ENCODE measurements at regions of chr10 and their contacts with region 1.

Region 1: DNA sequence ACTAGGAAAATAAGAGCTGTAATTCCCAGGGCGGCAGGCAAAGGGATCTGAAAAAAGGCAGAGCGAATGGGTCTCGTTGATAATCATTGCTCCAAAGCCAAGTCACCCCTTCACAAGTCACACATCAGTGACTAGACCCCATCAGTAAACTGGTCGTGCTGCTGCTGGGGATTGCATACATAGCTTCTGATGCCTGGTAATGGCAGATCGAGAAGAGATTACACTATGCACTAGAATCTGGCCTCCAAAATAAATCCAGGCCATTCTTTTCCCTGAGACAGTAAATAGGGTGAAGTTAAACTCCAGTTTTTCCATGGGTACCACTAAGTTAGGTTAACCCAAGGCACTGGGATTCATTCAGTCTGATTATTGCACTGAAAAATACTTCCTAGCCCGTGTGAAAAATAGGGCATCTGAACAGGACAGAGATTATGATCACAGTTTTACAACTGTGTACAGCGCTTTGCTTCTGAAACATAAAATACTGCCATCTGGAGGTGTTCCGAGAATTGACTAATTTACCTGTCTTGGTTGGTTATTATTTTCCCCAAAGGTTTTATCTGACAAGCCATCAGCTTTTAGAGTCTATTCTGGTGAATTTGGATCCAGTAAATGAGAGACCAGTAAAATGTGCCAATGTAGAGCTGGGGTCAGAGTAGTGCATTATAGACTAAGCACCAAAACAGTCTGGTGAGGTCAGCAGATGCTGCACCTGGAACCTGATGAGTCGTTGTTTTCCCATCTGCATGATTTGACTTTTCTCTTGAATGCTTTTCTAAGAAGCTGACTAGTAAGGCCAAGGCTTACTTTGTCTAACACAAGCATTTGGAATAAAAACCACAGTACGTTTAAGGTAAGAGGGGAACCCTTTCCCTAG is 82.9 kb upstream of the AFAP1L2 start:
- DNase-seq: no peak
- H3K4me3 ChIP-seq: no peak overlapping the region
- H3K27ac ChIP-seq: no peak overlapping the region
- H3K4me1 ChIP-seq: peaks cover 51% of the 10 kb centered on the region
- CTCF ChIP-seq: peak; percentile 73

Region 2: DNA sequence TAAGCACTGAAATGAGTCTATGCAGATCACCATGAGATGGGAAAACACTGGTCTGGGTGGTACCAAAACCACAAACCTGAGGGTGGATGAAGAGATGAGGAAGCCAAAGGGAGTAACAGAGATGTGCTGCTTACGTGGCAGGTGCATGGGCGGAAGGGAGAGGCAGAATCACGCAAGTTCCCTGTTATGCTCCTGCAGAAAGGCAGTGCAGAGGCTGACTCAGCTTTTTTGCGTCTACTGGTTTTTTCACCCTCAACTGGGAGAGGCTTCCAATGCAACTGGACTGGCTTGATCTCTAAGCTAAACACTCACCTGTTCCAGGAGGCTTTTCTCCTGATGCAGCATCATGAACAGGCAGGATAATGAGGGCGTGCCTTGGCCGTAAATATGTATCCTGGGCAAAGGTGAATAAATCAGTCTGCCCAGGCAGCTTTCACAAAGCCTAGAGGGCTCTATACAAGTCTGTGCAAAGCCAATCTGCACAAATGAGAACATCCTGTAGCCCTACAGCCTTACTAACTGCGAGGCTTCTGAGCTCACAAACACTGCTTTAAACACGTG is 12.5 kb after region 1 on chr10:
- CTCF ChIA-PET with region 1: interaction called, 5 read pairs
- POLR2A ChIA-PET with region 1: interaction called, 10 read pairs
- intact Hi-C with region 1: no loop called
- DNase-seq: peak; percentile 75
- H3K4me3 ChIP-seq: peak overlapping the region; percentile 49
- H3K27ac ChIP-seq: peak overlapping the region; percentile 97
- H3K4me1 ChIP-seq: peaks cover 92% of the 10 kb centered on the region
- CTCF ChIP-seq: no peak

Region 3: GRCh38 chr10:114519284-114519624 is 32.1 kb after region 1 on chr10:
- CTCF ChIA-PET with region 1: interaction called, 3 read pairs
- POLR2A ChIA-PET with region 1: interaction called, 54 read pairs
- intact Hi-C with region 1: no loop called
- DNase-seq: no peak
- H3K4me3 ChIP-seq: no peak overlapping the region
- H3K27ac ChIP-seq: no peak overlapping the region
- H3K4me1 ChIP-seq: peaks cover 96% of the 10 kb centered on the region
- CTCF ChIP-seq: no peak

Region 4: DNA sequence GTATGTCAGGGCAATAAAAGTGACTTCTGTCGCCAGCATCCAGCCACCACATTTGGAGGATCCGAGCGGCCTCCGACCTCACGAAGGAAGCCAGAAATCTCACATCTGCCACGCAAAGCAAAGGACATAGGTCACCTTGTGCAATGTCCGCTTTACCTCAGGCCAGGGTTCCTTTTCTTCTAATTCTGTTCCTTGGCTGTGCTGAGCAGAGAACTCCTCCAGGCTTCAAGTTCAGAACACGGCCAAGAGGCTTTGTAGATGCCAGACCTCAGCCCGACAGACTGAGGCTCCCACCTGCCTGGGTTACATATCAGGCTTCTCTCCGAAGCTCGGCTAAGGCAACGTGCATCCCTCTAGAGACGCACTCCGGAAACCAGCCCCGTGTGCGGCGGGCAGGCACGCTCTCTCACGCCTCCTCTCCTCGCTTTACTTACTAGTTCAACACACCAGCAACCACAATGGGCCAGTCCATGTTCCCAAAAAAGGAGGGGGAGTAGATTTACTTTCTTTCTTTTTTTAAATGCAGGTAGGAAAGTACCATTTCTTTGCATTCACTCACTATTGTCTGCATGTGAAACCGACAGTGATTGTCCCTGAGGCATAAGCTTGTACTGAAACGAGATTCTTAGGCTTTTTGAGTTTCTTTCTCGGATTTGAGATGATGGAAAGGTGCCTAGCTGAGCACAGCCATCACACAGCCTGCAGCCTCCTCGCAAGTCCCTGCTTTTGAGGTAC is 39.5 kb after region 1 on chr10:
- CTCF ChIA-PET with region 1: interaction called, 5 read pairs
- POLR2A ChIA-PET with region 1: interaction called, 54 read pairs
- intact Hi-C with region 1: no loop called
- DNase-seq: peak; percentile 98
- H3K4me3 ChIP-seq: peak overlapping the region; percentile 89
- H3K27ac ChIP-seq: peak overlapping the region; percentile 91
- H3K4me1 ChIP-seq: peaks cover 35% of the 10 kb centered on the region
- CTCF ChIP-seq: no peak

Region 5: GRCh38 chr10:114600057-114600456 is 112.9 kb after region 1 on chr10:
- CTCF ChIA-PET with region 1: no interaction called
- POLR2A ChIA-PET with region 1: no interaction called
- intact Hi-C with region 1: no loop called
- DNase-seq: no peak
- H3K4me3 ChIP-seq: no peak overlapping the region
- H3K27ac ChIP-seq: no peak overlapping the region
- H3K4me1 ChIP-seq: no peaks in the 10 kb centered on the region
- CTCF ChIP-seq: no peak

Region 6: GRCh38 chr10:114758331-114758730 is 271.2 kb after region 1 on chr10:
- CTCF ChIA-PET with region 1: no interaction called
- POLR2A ChIA-PET with region 1: no interaction called
- intact Hi-C with region 1: no loop called
- DNase-seq: no peak
- H3K4me3 ChIP-seq: no peak overlapping the region
- H3K27ac ChIP-seq: no peak overlapping the region
- H3K4me1 ChIP-seq: no peaks in the 10 kb centered on the region
- CTCF ChIP-seq: no peak

Measured in OCI-LY7 (cell line).